ENCODE measurements at regions of chr3 and their contacts with region 1.

Region 1: DNA sequence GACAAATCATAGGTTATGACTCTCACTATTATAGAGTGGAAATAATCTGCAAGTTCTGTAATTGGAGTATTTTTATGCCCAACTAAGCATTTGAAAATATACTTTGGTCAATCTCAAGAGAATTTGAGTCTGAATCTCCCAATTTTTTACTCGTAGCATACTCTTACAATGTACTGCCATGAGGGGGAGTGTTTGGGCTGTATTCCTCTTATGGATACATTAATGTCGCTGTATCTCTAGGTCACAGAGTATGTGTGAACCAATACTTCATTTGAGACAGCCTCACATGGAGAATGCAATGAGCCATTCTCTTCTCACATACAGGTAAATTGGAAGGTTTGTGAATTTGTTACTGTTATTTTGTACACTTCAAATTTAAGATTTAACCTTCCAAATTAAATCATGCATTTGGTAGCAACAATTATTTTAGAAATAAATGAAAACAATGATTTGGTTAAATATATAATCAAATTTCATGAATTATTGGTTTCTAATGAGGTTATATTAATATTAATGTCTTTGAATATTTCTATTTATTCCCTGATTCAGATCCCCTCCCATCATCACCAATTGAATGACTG is 5.5 kb upstream of the CD200 start:
- DNase-seq: peak; percentile 59
- H3K4me3 ChIP-seq: no peak overlapping the region
- H3K27ac ChIP-seq: no peak overlapping the region
- H3K4me1 ChIP-seq: no peaks in the 10 kb centered on the region
- H3K27me3 ChIP-seq: no peaks in the 10 kb centered on the region
- CTCF ChIP-seq: peak; percentile 53

Region 2: DNA sequence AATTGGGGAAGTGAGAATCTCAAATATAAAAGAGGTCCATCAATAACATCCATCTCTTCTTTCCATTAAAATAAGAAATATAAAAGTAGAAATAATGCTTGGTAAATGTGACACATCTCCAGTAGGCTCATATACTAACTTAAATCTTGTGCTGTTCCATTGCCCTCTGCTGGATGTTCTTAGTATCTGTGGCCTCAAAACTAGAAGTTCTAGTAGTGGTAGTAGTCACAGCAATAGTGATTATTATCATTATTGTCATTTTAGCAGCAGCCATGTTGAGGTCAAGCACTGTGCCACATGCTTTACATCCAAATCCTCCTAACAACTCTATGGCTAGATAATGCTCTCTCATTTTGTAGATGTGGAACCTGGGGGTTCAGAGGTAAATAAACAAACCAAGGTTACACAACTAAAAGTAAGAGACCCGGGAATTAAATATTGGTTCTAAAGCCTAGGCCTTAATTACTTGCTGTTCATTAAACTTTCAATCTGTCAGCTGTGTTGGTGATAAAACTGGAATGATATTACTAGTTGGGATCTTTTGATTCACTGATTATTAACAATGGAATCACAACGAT is 192.1 kb after region 1 on chr3:
- intact Hi-C with region 1: loop called (anchors 2 kb)
- DNase-seq: peak; percentile 54
- H3K4me3 ChIP-seq: no peak overlapping the region
- H3K27ac ChIP-seq: no peak overlapping the region
- H3K4me1 ChIP-seq: no peaks in the 10 kb centered on the region
- H3K27me3 ChIP-seq: no peaks in the 10 kb centered on the region
- CTCF ChIP-seq: peak; percentile 67